Common myeloid progenitor, CD34-positive (primary cell): ENCODE measurements at regions of chr17 and their contacts with region 1.

Region 1: GRCh38 chr17:49556223-49556971 is 19.3 kb upstream of the NXPH3 start:
- DNase-seq: peak; percentile 66 to 85 (median 83)
- H3K4me3 ChIP-seq: peak overlapping the region in 1 of 7 experiments; percentile 30
- H3K27ac ChIP-seq: no peak overlapping the region
- H3K4me1 ChIP-seq: peaks cover 0 to 7% (median 6%) of the 10 kb centered on the region in 4 experiments
- H3K27me3 ChIP-seq: peaks cover 0 to 2% (median 0%) of the 10 kb centered on the region in 5 experiments

Region 2: DNA sequence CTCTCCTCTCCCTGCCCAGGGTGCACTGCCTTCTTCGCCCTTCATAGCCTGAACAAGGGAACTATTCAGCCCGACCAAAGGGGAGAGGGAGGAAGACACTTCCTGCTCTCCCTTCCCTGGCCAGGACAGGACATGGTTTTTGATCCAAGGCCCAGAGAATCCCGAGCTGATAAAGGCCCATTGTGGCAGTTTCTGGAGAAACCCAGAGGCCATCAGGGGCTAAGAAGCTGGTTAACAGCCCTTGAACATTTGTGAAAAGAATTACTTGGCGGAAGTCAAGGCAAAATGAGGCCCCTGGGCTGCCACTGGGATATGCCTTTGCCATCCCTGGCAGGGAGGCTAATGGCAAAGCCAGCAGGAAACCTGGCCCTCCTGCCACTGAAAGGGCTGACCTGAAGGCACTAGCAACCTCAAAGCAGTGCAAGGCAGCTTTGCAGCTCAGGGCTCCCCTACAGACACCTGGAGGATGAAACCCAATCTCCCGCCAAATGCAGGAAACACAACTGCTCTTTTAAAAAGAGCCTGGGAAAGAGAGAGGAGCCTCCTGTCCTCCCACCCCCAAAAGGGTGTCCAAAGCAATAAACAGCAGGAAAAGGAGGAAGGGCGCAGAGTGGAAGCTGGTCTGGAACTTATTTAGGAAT is 154.3 kb before region 1 on chr17:
- CTCF ChIA-PET with region 1: interaction called, 168 read pairs
- POLR2A ChIA-PET with region 1: no interaction called
- DNase-seq: no peak
- H3K4me3 ChIP-seq: no peak overlapping the region
- H3K27ac ChIP-seq: no peak overlapping the region
- H3K4me1 ChIP-seq: peaks cover 8 to 51% (median 48%) of the 10 kb centered on the region in 4 experiments
- H3K27me3 ChIP-seq: no peaks in the 10 kb centered on the region

Region 3: DNA sequence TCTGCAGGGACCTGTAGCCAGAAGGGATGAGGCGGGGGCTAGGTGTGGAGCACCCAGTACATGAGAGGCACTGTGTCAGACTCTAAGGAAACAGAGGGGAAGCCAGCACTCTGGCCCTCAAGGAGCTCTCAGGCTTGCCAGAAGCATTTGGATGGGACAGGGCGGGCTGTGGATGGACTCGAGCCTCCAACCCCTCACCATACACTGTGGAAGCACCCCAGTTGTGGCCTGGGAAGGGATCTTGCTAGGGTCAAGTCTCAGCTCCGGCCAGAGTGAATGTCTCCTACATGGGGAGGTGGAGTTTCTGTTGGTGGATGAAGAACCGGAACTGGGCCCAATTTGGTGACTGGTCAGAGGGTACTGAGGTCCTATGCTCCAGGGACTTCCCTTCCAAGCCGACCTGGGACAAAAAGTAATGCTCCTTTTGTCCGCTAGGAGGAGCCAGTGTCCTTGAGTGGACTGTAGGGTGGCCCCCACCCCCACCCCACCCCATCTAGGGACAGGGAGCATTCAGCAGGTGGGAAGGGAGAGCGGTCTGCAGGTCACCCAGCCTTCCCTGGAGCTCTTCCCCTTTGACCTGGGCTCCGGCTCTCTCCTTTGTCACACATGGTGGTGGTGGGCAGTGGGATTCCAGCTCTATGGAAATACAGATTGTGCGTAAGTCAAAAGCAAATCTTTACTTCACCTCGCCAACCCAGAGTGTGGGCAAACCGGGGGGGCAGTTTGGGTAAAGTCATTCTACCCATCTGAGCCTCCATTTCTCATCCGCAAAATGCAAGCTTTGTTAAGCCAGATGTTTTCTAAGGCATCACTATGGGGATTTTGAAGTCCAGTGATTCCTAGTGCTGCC is 121.4 kb before region 1 on chr17:
- CTCF ChIA-PET with region 1: interaction called, 48 read pairs
- POLR2A ChIA-PET with region 1: no interaction called
- DNase-seq: peak; percentile 40 to 52 (median 46)
- H3K4me3 ChIP-seq: no peak overlapping the region
- H3K27ac ChIP-seq: no peak overlapping the region
- H3K4me1 ChIP-seq: peaks cover 3 to 13% (median 11%) of the 10 kb centered on the region in 4 experiments
- H3K27me3 ChIP-seq: peaks cover 0 to 14% (median 7%) of the 10 kb centered on the region in 5 experiments

Region 4: DNA sequence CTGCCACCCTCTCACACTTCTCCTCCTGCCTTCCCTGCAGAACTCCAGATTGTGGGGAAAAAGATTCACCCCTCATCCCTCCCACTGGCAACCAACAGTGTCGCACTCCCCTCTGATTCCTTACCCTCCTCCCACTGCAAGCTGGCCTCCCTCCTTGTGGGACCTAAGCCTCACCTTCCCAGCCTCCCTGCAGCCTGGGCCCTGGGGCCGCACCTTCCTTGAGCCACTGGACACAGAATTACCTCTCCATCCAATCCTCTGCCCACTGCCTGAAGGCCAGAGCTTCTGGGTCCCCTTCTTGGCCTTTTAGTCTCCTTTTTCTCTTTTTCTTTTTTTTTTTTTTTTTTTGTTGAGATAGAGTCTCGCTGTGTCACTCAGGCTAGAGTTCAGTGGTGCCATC is 27.4 kb before region 1 on chr17:
- CTCF ChIA-PET with region 1: interaction called, 11 read pairs
- POLR2A ChIA-PET with region 1: no interaction called
- DNase-seq: no peak
- H3K4me3 ChIP-seq: no peak overlapping the region
- H3K27ac ChIP-seq: no peak overlapping the region
- H3K4me1 ChIP-seq: peaks cover 0 to 4% (median 1%) of the 10 kb centered on the region in 4 experiments
- H3K27me3 ChIP-seq: peaks cover 0 to 14% (median 2%) of the 10 kb centered on the region in 5 experiments

Region 5: DNA sequence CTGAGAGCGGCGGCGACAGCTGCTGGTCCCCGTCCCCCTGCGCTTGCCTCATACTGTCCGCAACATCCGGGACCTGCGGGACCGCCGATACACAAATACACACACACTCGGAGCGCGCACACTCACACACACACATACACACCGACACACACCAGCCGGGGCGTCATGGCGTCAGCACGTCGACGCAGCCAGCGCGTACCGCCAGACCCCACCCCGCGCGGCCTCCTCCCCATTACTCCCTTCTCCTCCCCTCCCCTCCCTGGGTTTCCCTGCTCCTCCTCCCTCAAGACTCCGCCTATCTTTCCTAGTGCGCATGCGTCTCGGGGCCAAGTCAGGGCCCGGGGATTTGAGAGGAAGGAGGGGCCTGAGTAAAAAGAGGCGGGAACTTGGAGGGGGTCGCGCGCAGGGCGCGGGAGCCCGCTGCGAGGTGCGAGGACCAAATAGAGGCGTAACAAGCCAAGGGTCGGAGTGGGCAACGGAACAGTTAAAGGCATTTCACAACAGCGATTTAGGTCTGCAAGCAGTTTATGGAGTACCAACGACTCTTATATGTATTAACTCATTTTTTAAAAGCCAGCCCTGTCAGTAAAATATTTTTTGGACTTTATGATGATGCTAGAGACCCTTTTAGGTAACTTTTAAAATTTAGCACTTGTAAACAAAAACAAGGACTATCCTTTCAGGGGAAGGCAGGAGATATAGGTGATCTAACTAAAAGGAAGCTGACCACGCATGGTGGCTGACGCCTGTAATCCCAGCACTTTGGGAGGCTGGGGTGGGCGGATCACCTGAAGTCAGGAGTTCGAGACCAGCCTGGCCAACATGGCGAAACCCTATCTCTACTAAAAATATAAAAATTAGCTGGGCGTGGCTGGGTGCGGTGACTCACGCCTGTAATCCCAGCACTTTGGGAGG is 121.8 kb after region 1 on chr17 and contains the start of gene SPOP:
- CTCF ChIA-PET with region 1: no interaction called
- POLR2A ChIA-PET with region 1: no interaction called
- DNase-seq: peak; percentile 99 to 100 (median 100)
- H3K4me3 ChIP-seq: peak within 1 kb of the TSS; percentile 43 to 89 (median 70)
- H3K27ac ChIP-seq: peak within 1 kb of the TSS; percentile 98
- H3K4me1 ChIP-seq: peaks cover 22 to 42% (median 26%) of the 10 kb centered on the region in 4 experiments
- H3K27me3 ChIP-seq: no peaks in the 10 kb centered on the region

Region 6: DNA sequence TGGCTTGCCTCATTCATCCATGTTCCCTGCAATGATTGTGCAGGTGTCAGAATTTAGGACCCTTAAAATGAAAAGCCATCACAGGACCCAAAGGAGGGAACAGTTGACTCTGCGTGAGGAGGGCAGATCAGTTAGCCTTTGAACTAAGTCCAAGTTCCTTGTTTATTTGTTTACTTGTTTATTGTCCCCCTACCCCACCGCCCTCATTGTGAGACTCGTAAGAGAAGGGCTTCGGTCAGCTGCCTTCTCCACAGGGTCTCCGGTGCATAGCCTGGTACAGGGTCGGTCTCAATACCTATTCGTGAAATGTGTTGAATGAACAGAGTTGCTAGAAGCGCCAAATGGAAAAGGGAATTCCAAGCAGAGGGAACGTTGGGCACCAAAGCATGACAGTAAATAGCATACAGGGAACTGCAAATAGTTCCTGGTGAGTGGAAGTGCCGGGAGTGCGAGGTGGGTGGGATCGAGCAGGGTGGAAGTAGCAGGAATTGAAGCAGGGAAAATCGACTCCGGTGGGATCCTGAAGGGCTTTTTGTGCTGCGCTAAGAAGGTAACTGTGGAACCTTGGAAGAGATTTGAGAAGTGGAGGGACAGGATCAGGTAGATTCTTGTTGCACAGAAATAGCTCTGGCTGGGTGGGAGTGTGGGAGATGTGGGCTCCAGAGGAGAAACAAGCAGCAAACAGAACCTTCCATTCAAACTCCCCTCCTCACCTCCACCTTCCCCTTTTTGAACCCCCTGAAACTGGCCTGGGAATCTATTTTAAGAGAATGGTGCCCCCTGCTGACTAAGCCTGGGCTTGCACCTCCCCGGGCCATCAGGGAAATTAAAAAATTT is 138.7 kb after region 1 on chr17:
- CTCF ChIA-PET with region 1: interaction called, 65 read pairs
- POLR2A ChIA-PET with region 1: interaction called, 4 read pairs
- DNase-seq: peak; percentile 65 to 83 (median 80)
- H3K4me3 ChIP-seq: peak overlapping the region in 1 of 7 experiments; percentile 55
- H3K27ac ChIP-seq: no peak overlapping the region
- H3K4me1 ChIP-seq: peaks cover 7 to 21% (median 20%) of the 10 kb centered on the region in 4 experiments
- H3K27me3 ChIP-seq: no peaks in the 10 kb centered on the region